ENCODE measurements at regions of chr11 and their contacts with region 1.

Region 1: GRCh38 chr11:27183672-27184457 is 143.2 kb downstream of the BBOX1 start:
- DNase-seq: peak; percentile 72
- H3K4me3 Mint-ChIP-seq: no peak overlapping the region
- H3K27ac Mint-ChIP-seq: no peak overlapping the region
- H3K4me1 Mint-ChIP-seq: no peaks in the 10 kb centered on the region
- H3K27me3 Mint-ChIP-seq: peaks cover 27% of the 10 kb centered on the region
- CTCF ChIP-seq: peak; percentile 78

Region 2: GRCh38 chr11:26901162-26901561 is 282.7 kb before region 1 on chr11:
- CTCF ChIA-PET with region 1: no interaction called
- POLR2A ChIA-PET with region 1: no interaction called
- intact Hi-C with region 1: no loop called
- DNase-seq: no peak
- H3K4me3 Mint-ChIP-seq: no peak overlapping the region
- H3K27ac Mint-ChIP-seq: peak overlapping the region; percentile 37
- H3K4me1 Mint-ChIP-seq: peaks cover 13% of the 10 kb centered on the region
- H3K27me3 Mint-ChIP-seq: no peaks in the 10 kb centered on the region
- CTCF ChIP-seq: no peak

Region 3: DNA sequence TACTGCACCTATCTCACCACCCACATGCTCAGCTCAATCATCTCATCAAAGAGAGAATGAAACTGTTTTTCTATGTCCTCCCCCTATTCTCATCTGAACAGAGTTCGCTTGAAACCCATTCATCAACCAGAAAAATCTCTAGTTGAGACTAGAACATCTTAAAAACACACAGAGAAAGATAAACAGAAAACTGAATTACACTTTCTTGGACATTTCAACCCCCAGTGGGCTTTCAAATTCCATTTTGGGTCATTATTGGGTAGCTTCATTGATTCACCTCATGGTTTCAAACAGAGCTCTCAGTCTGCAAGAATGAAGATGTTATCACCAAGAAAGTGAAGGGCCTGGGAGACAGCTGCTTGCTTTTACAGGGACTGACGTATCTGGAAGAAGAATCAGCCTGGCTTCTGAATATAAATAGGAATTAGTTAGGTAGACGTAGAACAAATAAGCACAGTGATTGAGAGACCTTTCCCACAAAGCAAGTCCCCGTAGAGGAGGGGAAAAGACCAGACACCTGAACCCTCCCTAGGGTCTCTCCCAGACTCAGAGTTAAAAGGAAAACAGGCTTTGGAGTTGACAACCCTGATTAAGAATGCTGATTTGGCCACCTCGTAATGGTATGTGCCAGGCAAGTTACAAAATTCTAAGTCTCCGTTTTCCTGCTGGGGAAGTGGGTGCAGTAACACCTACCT is 12.5 kb after region 1 on chr11:
- CTCF ChIA-PET with region 1: interaction called, 39 read pairs
- POLR2A ChIA-PET with region 1: interaction called, 5 read pairs
- intact Hi-C with region 1: no loop called
- DNase-seq: no peak
- H3K4me3 Mint-ChIP-seq: no peak overlapping the region
- H3K27ac Mint-ChIP-seq: no peak overlapping the region
- H3K4me1 Mint-ChIP-seq: no peaks in the 10 kb centered on the region
- H3K27me3 Mint-ChIP-seq: no peaks in the 10 kb centered on the region
- CTCF ChIP-seq: no peak

Region 4: GRCh38 chr11:27201454-27202236 is 17.8 kb after region 1 on chr11:
- CTCF ChIA-PET with region 1: interaction called, 39 read pairs
- POLR2A ChIA-PET with region 1: interaction called, 5 read pairs
- intact Hi-C with region 1: no loop called
- DNase-seq: peak; percentile 70
- H3K4me3 Mint-ChIP-seq: no peak overlapping the region
- H3K27ac Mint-ChIP-seq: no peak overlapping the region
- H3K4me1 Mint-ChIP-seq: peaks cover 6% of the 10 kb centered on the region
- H3K27me3 Mint-ChIP-seq: no peaks in the 10 kb centered on the region
- CTCF ChIP-seq: no peak

Region 5: DNA sequence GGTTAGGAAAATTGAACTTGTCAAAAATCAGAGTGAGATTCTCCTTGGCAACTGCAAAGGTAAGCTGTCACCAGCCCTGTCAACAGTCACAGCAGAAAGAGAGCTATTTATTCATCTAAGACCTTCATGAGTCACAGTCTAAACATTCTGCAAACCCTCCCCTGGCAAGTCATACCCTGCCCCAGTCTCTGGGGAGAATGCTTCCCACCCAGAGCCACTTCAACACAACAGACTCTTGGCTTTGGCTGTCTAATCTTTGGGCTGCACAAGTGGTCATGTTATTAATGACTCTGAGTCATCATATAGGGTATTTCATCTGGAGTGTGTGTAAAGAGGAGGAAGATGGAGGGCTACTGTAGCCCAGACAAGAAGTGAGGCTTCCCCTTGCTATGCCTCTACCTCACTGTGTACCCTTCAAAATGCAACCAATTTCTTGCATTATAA is 25.7 kb after region 1 on chr11:
- CTCF ChIA-PET with region 1: interaction called, 39 read pairs
- POLR2A ChIA-PET with region 1: interaction called, 7 read pairs
- intact Hi-C with region 1: no loop called
- DNase-seq: peak; percentile 94
- H3K4me3 Mint-ChIP-seq: no peak overlapping the region
- H3K27ac Mint-ChIP-seq: peak overlapping the region; percentile 74
- H3K4me1 Mint-ChIP-seq: peaks cover 37% of the 10 kb centered on the region
- H3K27me3 Mint-ChIP-seq: no peaks in the 10 kb centered on the region
- CTCF ChIP-seq: no peak

Region 6: GRCh38 chr11:27362749-27363575 is 179.1 kb after region 1 on chr11 and contains the start of gene CCDC34:
- CTCF ChIA-PET with region 1: no interaction called
- POLR2A ChIA-PET with region 1: no interaction called
- intact Hi-C with region 1: loop called (anchors 2 kb)
- DNase-seq: peak; percentile 94
- H3K4me3 Mint-ChIP-seq: peak within 1 kb of the TSS; percentile 93
- H3K27ac Mint-ChIP-seq: peak within 1 kb of the TSS; percentile 93
- H3K4me1 Mint-ChIP-seq: peaks cover 19% of the 10 kb centered on the region
- H3K27me3 Mint-ChIP-seq: no peaks in the 10 kb centered on the region
- CTCF ChIP-seq: no peak
- total RNA-seq, gene CCDC34: 9.0 and 11.1 TPM in 2 replicates

Region 7: DNA sequence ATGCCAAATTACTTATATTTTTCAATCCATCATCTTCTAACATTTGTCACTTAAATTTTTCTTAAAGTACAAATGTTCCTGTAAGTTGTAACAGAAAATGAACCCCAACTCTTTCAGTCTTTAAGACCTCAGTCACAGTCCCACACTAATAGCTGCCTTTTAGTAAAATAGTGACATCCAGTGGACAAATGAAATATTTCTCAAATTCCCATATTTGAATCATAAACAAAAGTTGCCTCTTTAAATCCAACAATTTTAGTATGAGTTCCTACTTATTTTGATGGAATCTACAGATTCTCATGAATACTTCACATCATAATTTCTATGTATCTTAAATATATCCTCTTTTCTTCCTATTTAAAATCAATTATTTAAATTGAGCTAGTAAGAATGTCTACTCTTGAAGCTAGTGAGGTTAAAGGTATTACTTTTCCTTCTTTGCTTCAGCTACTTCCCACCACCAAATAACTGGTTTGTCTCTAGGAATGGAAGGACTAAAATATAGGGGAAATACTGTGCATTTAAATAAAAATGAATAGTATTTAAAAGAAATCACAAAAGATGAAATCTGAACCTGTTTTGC is 313.5 kb after region 1 on chr11:
- CTCF ChIA-PET with region 1: interaction called, 63 read pairs
- POLR2A ChIA-PET with region 1: interaction called, 3 read pairs
- intact Hi-C with region 1: no loop called
- DNase-seq: peak; percentile 29
- H3K4me3 Mint-ChIP-seq: no peak overlapping the region
- H3K27ac Mint-ChIP-seq: no peak overlapping the region
- H3K4me1 Mint-ChIP-seq: peaks cover 8% of the 10 kb centered on the region
- H3K27me3 Mint-ChIP-seq: no peaks in the 10 kb centered on the region
- CTCF ChIP-seq: peak; percentile 29